ENCODE measurements at regions of chr18 and their contacts with region 1.

Region 1: DNA sequence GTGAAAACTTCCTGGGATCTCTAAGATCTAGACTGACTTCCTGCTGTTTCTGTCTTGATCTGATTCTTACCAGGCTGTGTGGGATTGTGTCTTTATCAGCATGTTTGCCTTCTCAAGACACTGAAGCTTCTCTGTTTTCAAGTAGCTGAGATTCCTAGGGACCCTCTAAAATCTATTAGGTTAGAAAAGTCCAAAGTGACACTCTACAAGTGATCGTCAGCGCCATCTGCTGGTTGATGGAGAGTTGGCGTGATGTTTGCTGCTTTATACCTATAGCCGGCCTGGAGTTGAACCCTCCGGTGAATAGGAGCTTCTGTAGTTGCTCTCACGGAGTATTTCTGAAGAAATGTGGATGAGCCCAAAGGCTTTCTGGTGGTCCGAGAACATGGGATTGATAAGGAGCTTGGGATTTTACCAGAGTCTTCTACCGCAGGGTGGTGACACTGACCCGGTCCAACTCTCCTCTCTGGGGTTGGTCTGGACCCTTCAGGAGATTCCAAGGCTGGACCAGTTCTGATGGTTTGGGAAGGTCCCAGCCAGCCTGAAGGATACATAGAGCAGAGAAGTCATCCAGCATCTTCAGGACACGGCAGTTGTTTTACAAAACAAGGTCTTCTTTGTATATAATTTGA is 96.0 kb upstream of the TTC39C start:
- DNase-seq: peak; percentile 66 to 88 (median 83)
- ATAC-seq: peak; percentile 87
- H3K4me3 ChIP-seq: no peak overlapping the region
- H3K4me3 Mint-ChIP-seq: no peak overlapping the region
- H3K27ac ChIP-seq: no peak overlapping the region
- H3K27ac Mint-ChIP-seq: no peak overlapping the region
- H3K4me1 ChIP-seq: no peaks in the 10 kb centered on the region
- H3K4me1 Mint-ChIP-seq: peaks cover 9% of the 10 kb centered on the region
- H3K27me3 ChIP-seq: no peaks in the 10 kb centered on the region
- H3K27me3 Mint-ChIP-seq: no peaks in the 10 kb centered on the region
- CTCF ChIP-seq: peak; percentile 97

Region 2: GRCh38 chr18:23627320-23627719 is 291.2 kb before region 1 on chr18:
- CTCF ChIA-PET with region 1: interaction called, 41 read pairs
- POLR2A ChIA-PET with region 1: no interaction called
- intact Hi-C with region 1: loop called (anchors 1 kb)
- DNase-seq: no peak
- ATAC-seq: no peak
- H3K4me3 ChIP-seq: no peak overlapping the region
- H3K4me3 Mint-ChIP-seq: no peak overlapping the region
- H3K27ac ChIP-seq: no peak overlapping the region
- H3K27ac Mint-ChIP-seq: no peak overlapping the region
- H3K4me1 ChIP-seq: no peaks in the 10 kb centered on the region
- H3K4me1 Mint-ChIP-seq: no peaks in the 10 kb centered on the region
- H3K27me3 ChIP-seq: no peaks in the 10 kb centered on the region
- H3K27me3 Mint-ChIP-seq: peaks cover 2% of the 10 kb centered on the region
- CTCF ChIP-seq: no peak

Region 3: DNA sequence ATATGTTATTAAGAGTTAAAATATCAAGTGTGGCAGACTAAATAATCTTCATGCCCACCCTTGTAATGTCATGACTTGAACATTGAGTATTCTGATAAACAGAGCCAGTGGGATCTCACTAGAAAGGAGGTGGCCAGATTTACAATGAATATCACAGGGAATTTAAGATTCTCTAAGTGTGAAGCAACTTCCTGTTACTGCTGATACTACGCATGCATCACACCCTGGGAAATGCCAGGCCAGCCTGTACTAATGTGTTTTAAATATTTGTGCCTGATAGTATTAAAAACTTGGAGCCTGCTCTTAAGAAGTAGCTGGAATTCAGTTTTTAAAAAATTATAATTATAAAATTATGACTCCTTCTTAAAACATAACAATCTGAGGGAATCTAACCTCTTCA is 80.9 kb before region 1 on chr18:
- CTCF ChIA-PET with region 1: interaction called, 16 read pairs
- POLR2A ChIA-PET with region 1: no interaction called
- intact Hi-C with region 1: no loop called
- DNase-seq: peak in 2 of 9 experiments; percentile 43 to 53
- ATAC-seq: no peak
- H3K4me3 ChIP-seq: no peak overlapping the region
- H3K4me3 Mint-ChIP-seq: no peak overlapping the region
- H3K27ac ChIP-seq: no peak overlapping the region
- H3K27ac Mint-ChIP-seq: no peak overlapping the region
- H3K4me1 ChIP-seq: no peaks in the 10 kb centered on the region
- H3K4me1 Mint-ChIP-seq: peaks cover 3% of the 10 kb centered on the region
- H3K27me3 ChIP-seq: no peaks in the 10 kb centered on the region
- H3K27me3 Mint-ChIP-seq: no peaks in the 10 kb centered on the region
- CTCF ChIP-seq: no peak

Region 4: DNA sequence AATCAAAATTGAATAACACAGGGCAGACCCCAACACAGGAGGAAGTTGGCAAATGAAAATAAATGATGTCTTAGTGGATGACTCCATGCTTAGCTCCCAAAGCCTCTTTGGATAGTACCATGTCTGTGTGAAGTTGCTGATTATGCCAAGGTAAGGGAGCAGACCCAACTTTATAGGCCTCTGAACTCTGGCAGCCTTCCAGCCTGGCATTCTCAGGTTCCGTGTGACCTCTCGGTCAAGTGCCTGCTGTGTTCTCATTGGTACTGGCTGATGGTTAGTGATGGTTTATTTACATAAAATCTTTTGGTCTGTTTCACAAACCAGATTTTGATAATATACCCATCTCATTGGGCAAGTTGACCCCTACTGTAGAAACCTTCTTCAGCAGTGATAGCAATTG is 16.1 kb before region 1 on chr18:
- CTCF ChIA-PET with region 1: interaction called, 22 read pairs
- POLR2A ChIA-PET with region 1: no interaction called
- intact Hi-C with region 1: no loop called
- DNase-seq: no peak
- ATAC-seq: no peak
- H3K4me3 ChIP-seq: no peak overlapping the region
- H3K4me3 Mint-ChIP-seq: no peak overlapping the region
- H3K27ac ChIP-seq: no peak overlapping the region
- H3K27ac Mint-ChIP-seq: no peak overlapping the region
- H3K4me1 ChIP-seq: peaks cover 7% of the 10 kb centered on the region
- H3K4me1 Mint-ChIP-seq: peaks cover 8% of the 10 kb centered on the region
- H3K27me3 ChIP-seq: no peaks in the 10 kb centered on the region
- H3K27me3 Mint-ChIP-seq: no peaks in the 10 kb centered on the region
- CTCF ChIP-seq: no peak

Region 5: GRCh38 chr18:24014062-24014985 is 95.8 kb after region 1 on chr18 and contains the start of gene TTC39C:
- CTCF ChIA-PET with region 1: interaction called, 10 read pairs
- POLR2A ChIA-PET with region 1: no interaction called
- intact Hi-C with region 1: loop called in 1 of 2 experiments (anchors 5 kb)
- DNase-seq: peak; percentile 55 to 90 (median 83)
- ATAC-seq: peak; percentile 68
- H3K4me3 ChIP-seq: peak within 1 kb of the TSS; percentile 72 to 90
- H3K4me3 Mint-ChIP-seq: peak within 1 kb of the TSS; percentile 92
- H3K27ac ChIP-seq: peak within 1 kb of the TSS; percentile 58 to 80
- H3K27ac Mint-ChIP-seq: peak within 1 kb of the TSS; percentile 90
- H3K4me1 ChIP-seq: peaks cover 78% of the 10 kb centered on the region
- H3K4me1 Mint-ChIP-seq: peaks cover 78% of the 10 kb centered on the region
- H3K27me3 ChIP-seq: no peaks in the 10 kb centered on the region
- H3K27me3 Mint-ChIP-seq: no peaks in the 10 kb centered on the region
- CTCF ChIP-seq: no peak
- total RNA-seq, gene TTC39C: 84.7 to 85.7 TPM